ENCODE measurements at regions of chr16 and their contacts with region 1.

Region 1: GRCh38 chr16:2194852-2195321 is 1.5 kb downstream of the CASKIN1 start:
- DNase-seq: peak in 1 of 2 experiments; percentile 80
- H3K4me3 ChIP-seq: peak overlapping the region; percentile 39 to 74 (median 48); a peak in 7 of 8 replicates
- H3K27ac ChIP-seq: no peak overlapping the region; the same call in 1 of the 2 replicates
- H3K4me1 ChIP-seq: peaks cover 0 to 10% (median 3%) of the 10 kb centered on the region in 4 experiments; a peak in 4 of 7 replicates
- H3K27me3 ChIP-seq: peaks cover 4 to 32% (median 24%) of the 10 kb centered on the region in 4 experiments
- CTCF ChIP-seq: peak; percentile 72 to 98 (median 85)
- EP300 ChIP-seq: no peak
- POLR2A ChIP-seq: no peak
- RAD21 ChIP-seq: peak; percentile 88

Region 2: DNA sequence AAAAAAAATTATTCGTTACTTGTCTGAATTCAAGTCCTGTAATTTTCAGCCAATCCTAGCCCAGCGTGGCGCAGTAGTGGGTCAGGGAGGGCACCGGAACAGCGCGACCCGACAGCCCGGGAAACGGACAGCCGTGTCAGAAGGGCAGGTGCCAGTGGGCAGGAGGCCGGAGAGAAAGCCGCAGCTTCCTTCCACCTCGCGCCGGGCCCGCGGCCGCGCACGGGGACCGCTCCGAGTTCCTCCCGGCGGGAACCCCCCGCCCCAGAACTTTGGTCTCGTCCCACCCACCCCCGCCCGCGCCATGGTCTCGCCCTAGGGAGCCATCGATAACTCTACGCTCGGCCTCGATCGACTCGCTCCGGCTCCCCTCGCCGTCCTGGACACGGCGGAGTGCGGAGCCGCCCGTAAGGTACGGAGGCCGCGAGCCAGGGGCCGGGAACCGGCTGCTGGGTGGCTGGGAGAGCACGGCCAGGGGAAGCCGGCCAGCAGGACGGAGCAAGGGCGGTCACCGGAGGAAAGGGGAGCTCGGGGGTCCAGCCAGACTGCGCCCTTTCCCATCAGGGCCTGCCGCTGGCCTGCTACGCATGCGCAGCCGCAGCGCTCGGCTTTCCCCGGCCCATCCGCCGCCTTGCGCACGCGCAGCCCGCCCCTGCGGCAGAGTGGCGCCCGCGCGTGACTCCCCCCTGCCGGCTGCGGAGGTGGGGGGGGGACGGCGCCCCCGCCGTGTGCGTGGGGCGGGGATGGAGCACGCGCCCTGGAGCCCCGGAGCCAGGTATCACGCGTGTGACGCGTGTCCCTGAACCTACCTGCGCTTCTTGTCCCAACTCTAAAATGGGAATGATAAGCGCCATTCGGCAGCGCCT is 10.4 kb after region 1 on chr16 and contains the start of gene MLST8:
- CTCF ChIA-PET with region 1: interaction called, 23 read pairs
- POLR2A ChIA-PET with region 1: interaction called, 63 read pairs
- DNase-seq: peak in 1 of 2 experiments; percentile 91
- H3K4me3 ChIP-seq: peak within 1 kb of the TSS; percentile 78 to 97 (median 92)
- H3K27ac ChIP-seq: peak within 1 kb of the TSS; percentile 98
- H3K4me1 ChIP-seq: peaks cover 0 to 13% (median 8%) of the 10 kb centered on the region in 4 experiments; a peak in 6 of 7 replicates
- H3K27me3 ChIP-seq: no peaks in the 10 kb centered on the region; a peak in 3 of 7 replicates
- CTCF ChIP-seq: no peak
- EP300 ChIP-seq: peak in 1 of 2 experiments; percentile 97; a peak in 2 of 3 replicates
- POLR2A ChIP-seq: peak in 1 of 2 experiments; percentile 94; a peak in 2 of 3 replicates
- RAD21 ChIP-seq: no peak
- total RNA-seq, gene MLST8: 67.6 and 69.6 TPM in 2 replicates

Region 3: GRCh38 chr16:2213817-2214720 is 19.2 kb after region 1 on chr16:
- CTCF ChIA-PET with region 1: interaction called, 20 read pairs
- POLR2A ChIA-PET with region 1: interaction called, 63 read pairs
- DNase-seq: no peak
- H3K4me3 ChIP-seq: peak overlapping the region; percentile 74 to 92 (median 78)
- H3K27ac ChIP-seq: peak overlapping the region; percentile 78; the same call in 1 of the 2 replicates
- H3K4me1 ChIP-seq: peaks cover 0 to 17% (median 5%) of the 10 kb centered on the region in 4 experiments; a peak in 5 of 7 replicates
- H3K27me3 ChIP-seq: no peaks in the 10 kb centered on the region
- CTCF ChIP-seq: no peak
- EP300 ChIP-seq: no peak
- POLR2A ChIP-seq: no peak; a peak in 1 of 3 replicates
- RAD21 ChIP-seq: no peak

Region 4: DNA sequence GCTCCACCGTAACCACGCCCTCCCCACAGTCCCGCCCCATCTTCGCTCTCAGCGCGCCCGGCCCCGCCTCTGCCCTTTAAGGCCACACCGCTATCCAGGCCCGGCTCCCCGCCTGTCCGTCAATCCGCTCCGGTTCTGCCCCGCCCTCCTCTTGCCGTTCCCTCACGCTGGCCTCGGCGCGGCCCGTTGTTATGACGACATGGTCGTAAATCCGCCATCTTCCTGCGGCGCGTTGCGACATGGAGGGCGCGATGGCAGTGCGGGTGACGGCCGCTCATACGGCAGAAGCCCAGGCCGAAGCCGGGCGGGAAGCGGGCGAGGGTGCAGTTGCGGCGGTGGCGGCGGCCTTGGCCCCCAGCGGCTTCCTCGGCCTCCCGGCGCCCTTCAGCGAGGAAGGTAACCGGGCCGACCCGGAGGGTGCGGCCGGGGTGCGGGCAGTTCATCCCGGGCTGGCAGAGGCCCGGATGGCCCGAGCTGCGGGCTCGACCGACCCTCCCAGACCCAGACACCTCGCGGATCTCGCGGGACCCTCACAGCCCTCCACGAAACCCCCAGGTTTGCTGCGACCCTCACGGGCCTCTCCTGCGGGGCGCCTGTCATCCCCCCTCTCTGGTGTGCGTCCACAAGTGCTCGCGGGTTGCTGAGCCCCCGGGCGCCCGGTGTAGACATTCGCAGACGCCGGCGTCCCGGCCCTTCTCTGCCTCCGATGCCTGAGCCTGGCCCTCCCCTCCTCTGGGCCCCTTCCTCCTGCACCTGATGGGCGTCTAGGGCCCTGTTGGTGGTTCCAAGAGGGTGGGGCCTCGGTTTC is 28.7 kb after region 1 on chr16 and contains the start of gene E4F1:
- CTCF ChIA-PET with region 1: interaction called, 10 read pairs
- POLR2A ChIA-PET with region 1: interaction called, 7 read pairs
- DNase-seq: peak; percentile 99 to 100
- H3K4me3 ChIP-seq: peak within 1 kb of the TSS; percentile 67 to 93 (median 80)
- H3K27ac ChIP-seq: peak within 1 kb of the TSS; percentile 77
- H3K4me1 ChIP-seq: no peaks in the 10 kb centered on the region
- H3K27me3 ChIP-seq: no peaks in the 10 kb centered on the region
- CTCF ChIP-seq: peak in 1 of 3 experiments; percentile 14; a peak in 1 of 4 replicates
- EP300 ChIP-seq: peak in 1 of 2 experiments; percentile 48; a peak in 1 of 3 replicates
- POLR2A ChIP-seq: peak in 1 of 2 experiments; percentile 99; a peak in 2 of 3 replicates
- RAD21 ChIP-seq: no peak
- total RNA-seq, gene E4F1: 21.9 and 22.2 TPM in 2 replicates

Region 5: GRCh38 chr16:2236337-2237101 is 41.6 kb after region 1 on chr16 and contains the start of gene DNASE1L2:
- CTCF ChIA-PET with region 1: interaction called, 11 read pairs
- POLR2A ChIA-PET with region 1: interaction called, 22 read pairs
- DNase-seq: peak in 1 of 2 experiments; percentile 79
- H3K4me3 ChIP-seq: peak within 1 kb of the TSS; percentile 19 to 63 (median 37); a peak in 7 of 8 replicates
- H3K27ac ChIP-seq: no peak within 1 kb of the TSS
- H3K4me1 ChIP-seq: peaks cover 0 to 19% (median 10%) of the 10 kb centered on the region in 4 experiments; a peak in 5 of 7 replicates
- H3K27me3 ChIP-seq: peaks cover 4 to 20% (median 16%) of the 10 kb centered on the region in 4 experiments; a peak in 6 of 7 replicates
- CTCF ChIP-seq: peak in 1 of 3 experiments; percentile 0; a peak in 1 of 4 replicates
- EP300 ChIP-seq: no peak
- POLR2A ChIP-seq: peak in 1 of 2 experiments; percentile 46; a peak in 1 of 3 replicates
- RAD21 ChIP-seq: no peak
- total RNA-seq, gene DNASE1L2: 0.19 and 0.35 TPM in 2 replicates

Region 6: GRCh38 chr16:2251483-2252240 is 56.8 kb after region 1 on chr16 and contains the start of gene ECI1:
- CTCF ChIA-PET with region 1: interaction called, 26 read pairs
- POLR2A ChIA-PET with region 1: interaction called, 19 read pairs
- DNase-seq: peak; percentile 84 to 96
- H3K4me3 ChIP-seq: peak within 1 kb of the TSS; percentile 76 to 95 (median 83)
- H3K27ac ChIP-seq: peak within 1 kb of the TSS; percentile 86
- H3K4me1 ChIP-seq: peaks cover 4 to 6% (median 5%) of the 10 kb centered on the region in 4 experiments; a peak in 6 of 7 replicates
- H3K27me3 ChIP-seq: no peaks in the 10 kb centered on the region
- CTCF ChIP-seq: peak; percentile 61 to 63 (median 63)
- EP300 ChIP-seq: peak in 1 of 2 experiments; percentile 77; a peak in 1 of 3 replicates
- POLR2A ChIP-seq: peak; percentile 89 to 90
- RAD21 ChIP-seq: peak; percentile 62 to 71; a peak in 3 of 4 replicates
- total RNA-seq, gene ECI1: 79.5 and 80.0 TPM in 2 replicates